ENCODE measurements at regions of chr11 and their contacts with region 1.

Region 1: GRCh38 chr11:66317723-66318599 is 1.1 kb upstream of the CD248 start:
- DNase-seq: peak; percentile 74
- H3K4me3 ChIP-seq: no peak overlapping the region; the same call in 1 of the 2 replicates
- H3K27ac ChIP-seq: peak overlapping the region; percentile 99
- H3K27me3 ChIP-seq: no peaks in the 10 kb centered on the region
- CTCF ChIP-seq: no peak

Region 2: DNA sequence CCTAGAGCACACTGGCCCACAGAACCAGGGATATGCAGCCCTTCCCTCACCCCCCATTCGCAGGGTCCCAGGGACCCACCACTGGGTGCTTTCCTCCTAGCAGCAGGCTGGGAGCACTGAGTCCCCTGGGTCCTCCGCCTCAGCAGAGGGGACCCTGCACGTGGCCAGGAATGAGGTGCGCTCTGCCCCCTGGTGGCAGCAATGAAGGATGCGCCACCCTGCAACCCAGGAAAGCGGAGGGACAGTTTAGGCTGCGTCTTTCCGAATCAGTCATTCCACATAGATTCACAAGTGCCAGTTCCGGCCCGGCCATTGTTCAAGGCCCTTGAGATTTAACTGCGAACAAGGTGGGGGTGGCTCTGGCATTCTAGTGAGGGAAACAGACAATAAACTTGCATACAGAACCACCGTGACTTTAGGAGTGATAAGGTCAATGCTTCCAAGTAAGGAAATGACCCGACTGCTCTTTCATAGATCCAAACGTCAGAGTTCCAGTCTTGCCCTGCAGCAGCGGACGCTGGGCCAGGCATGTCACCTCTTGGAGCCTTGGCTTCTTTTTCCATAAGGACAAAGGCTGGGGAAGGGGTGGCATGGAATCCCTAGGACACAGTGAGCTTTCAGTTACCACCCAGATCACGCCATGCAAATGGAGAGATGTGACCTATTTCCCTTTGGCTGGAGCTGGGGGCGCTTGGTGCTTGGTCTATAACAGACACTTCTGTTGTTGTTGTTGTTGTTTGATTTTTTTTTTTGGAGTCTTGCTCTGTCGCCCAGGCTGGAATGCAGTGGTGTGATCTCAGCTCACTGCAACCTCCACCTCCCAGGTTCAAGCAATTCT is 10.6 kb after region 1 on chr11:
- CTCF ChIA-PET with region 1: interaction called, 62 read pairs
- POLR2A ChIA-PET with region 1: interaction called, 99 read pairs
- DNase-seq: no peak
- H3K4me3 ChIP-seq: no peak overlapping the region
- H3K27ac ChIP-seq: peak overlapping the region; percentile 89
- H3K27me3 ChIP-seq: no peaks in the 10 kb centered on the region
- CTCF ChIP-seq: peak; percentile 94

Region 3: GRCh38 chr11:66336234-66337102 is 18.5 kb after region 1 on chr11 and contains the start of gene RIN1:
- CTCF ChIA-PET with region 1: interaction called, 64 read pairs
- POLR2A ChIA-PET with region 1: interaction called, 99 read pairs
- DNase-seq: peak; percentile 97
- H3K4me3 ChIP-seq: peak within 1 kb of the TSS; percentile 85
- H3K27ac ChIP-seq: peak within 1 kb of the TSS; percentile 97
- H3K27me3 ChIP-seq: no peaks in the 10 kb centered on the region
- CTCF ChIP-seq: peak; percentile 24; the same call in 1 of the 2 replicates
- polyA plus RNA-seq, gene RIN1: 6.7 and 9.0 TPM in 2 replicates

Measured in AG04450 (cell line).